ENCODE measurements at regions of chr12 and their contacts with region 1.

Region 1: GRCh38 chr12:32811686-32812392 is 56.1 kb upstream of the YARS2 start:
- DNase-seq: no peak
- ATAC-seq: no peak
- H3K4me3 ChIP-seq: no peak overlapping the region
- H3K27ac ChIP-seq: no peak overlapping the region
- H3K4me1 ChIP-seq: no peaks in the 10 kb centered on the region
- H3K27me3 ChIP-seq: no peaks in the 10 kb centered on the region
- CTCF ChIP-seq: no peak
- EP300 ChIP-seq: no peak
- POLR2A ChIP-seq: no peak
- RAD21 ChIP-seq: no peak

Region 2: DNA sequence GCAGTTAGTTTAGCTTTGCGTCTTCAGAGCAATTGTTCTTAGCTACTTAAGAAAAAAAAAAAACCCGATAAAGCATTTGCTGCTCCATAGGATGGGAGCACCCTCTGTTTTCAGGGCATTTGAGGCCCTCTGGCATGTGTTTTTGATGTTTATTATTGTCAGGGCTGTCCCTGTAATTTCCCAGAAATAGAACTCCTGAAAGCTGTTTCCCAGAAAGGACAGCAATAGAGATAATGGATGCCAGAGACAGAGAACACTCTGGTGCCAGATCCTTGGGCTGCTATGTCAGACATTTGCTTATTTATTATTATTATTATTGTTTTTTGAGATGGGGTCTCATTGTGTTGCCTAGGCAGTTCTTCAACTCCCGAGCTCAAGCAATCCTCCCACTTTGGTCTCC is 1411.8 kb after region 1 on chr12:
- CTCF ChIA-PET with region 1: no interaction called
- POLR2A ChIA-PET with region 1: no interaction called
- in situ Hi-C with region 1: loop called (anchors 10 kb)
- intact Hi-C with region 1: no loop called
- DNase-seq: no peak
- ATAC-seq: no peak
- H3K4me3 ChIP-seq: no peak overlapping the region
- H3K27ac ChIP-seq: no peak overlapping the region
- H3K4me1 ChIP-seq: peaks cover 0 to 6% of the 10 kb centered on the region in 2 experiments; a peak in 2 of 5 replicates
- H3K27me3 ChIP-seq: no peaks in the 10 kb centered on the region
- CTCF ChIP-seq: no peak
- EP300 ChIP-seq: no peak
- POLR2A ChIP-seq: no peak
- RAD21 ChIP-seq: no peak

Measured in K562 (cell line).